Activated CD4-positive, alpha-beta memory T cell treated with anti-CD3 and anti-CD28 coated beads for 36 hours (primary cell): ENCODE measurements at regions of chr6 and their contacts with region 1.

Region 1: GRCh38 chr6:135195522-135195921 is 14.4 kb downstream of the MYB start:
- DNase-seq: no peak
- H3K4me3 Mint-ChIP-seq: no peak overlapping the region
- H3K27ac Mint-ChIP-seq: no peak overlapping the region
- H3K4me1 Mint-ChIP-seq: peaks cover 24% of the 10 kb centered on the region
- H3K27me3 Mint-ChIP-seq: no peaks in the 10 kb centered on the region

Region 2: GRCh38 chr6:135066397-135066796 is 129.1 kb before region 1 on chr6:
- CTCF ChIA-PET with region 1: no interaction called
- POLR2A ChIA-PET with region 1: no interaction called
- intact Hi-C with region 1: no loop called
- DNase-seq: no peak
- H3K4me3 Mint-ChIP-seq: no peak overlapping the region
- H3K27ac Mint-ChIP-seq: no peak overlapping the region
- H3K4me1 Mint-ChIP-seq: peaks cover 9% of the 10 kb centered on the region
- H3K27me3 Mint-ChIP-seq: no peaks in the 10 kb centered on the region

Region 3: GRCh38 chr6:135145063-135145800 is 50.3 kb before region 1 on chr6:
- CTCF ChIA-PET with region 1: interaction called, 4 read pairs
- POLR2A ChIA-PET with region 1: interaction called, 3 read pairs
- intact Hi-C with region 1: loop called (anchors 5 kb)
- DNase-seq: no peak
- H3K4me3 Mint-ChIP-seq: no peak overlapping the region
- H3K27ac Mint-ChIP-seq: peak overlapping the region; percentile 39
- H3K4me1 Mint-ChIP-seq: peaks cover 53% of the 10 kb centered on the region
- H3K27me3 Mint-ChIP-seq: peaks cover 2% of the 10 kb centered on the region

Region 4: DNA sequence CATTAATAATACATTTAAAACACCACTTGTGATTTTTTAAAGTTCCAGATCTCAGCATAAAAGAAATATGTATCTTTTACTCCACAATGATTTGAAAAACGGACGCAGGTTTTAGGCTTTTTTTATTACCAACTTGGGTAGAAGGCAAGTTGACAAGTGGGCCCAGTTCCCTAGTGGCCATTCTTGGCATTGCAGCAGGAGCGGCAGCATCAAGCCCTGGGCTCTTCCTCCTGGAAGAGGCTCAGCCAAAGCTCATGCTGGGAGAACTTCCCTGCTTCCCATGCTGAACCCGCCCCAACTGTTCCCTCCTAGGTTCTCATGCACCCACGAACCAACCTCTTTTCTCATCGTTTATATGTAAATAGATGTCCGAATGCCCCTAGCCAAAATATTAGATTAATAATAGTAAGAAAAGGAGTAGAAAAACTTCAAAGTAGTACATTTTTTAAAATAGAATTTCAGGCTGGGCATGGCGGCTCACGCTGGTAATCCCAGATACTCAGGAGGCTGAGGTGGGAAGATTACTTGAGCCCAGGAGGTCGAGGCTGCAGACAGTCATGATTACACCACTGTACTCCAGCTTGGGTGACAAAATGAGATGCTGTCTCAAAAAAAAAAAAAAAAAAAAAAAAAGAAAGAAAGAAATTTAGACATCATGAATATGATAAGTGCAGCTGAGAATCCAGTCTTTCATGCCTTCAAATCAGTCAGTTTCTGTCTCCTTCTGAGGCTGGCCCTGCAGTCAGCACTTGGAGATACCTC is 32.7 kb before region 1 on chr6:
- CTCF ChIA-PET with region 1: interaction called, 3 read pairs
- POLR2A ChIA-PET with region 1: no interaction called
- intact Hi-C with region 1: loop called (anchors 1 kb)
- DNase-seq: peak; percentile 54
- H3K4me3 Mint-ChIP-seq: peak overlapping the region; percentile 49
- H3K27ac Mint-ChIP-seq: peak overlapping the region; percentile 78
- H3K4me1 Mint-ChIP-seq: peaks cover 61% of the 10 kb centered on the region
- H3K27me3 Mint-ChIP-seq: peaks cover 3% of the 10 kb centered on the region

Region 5: DNA sequence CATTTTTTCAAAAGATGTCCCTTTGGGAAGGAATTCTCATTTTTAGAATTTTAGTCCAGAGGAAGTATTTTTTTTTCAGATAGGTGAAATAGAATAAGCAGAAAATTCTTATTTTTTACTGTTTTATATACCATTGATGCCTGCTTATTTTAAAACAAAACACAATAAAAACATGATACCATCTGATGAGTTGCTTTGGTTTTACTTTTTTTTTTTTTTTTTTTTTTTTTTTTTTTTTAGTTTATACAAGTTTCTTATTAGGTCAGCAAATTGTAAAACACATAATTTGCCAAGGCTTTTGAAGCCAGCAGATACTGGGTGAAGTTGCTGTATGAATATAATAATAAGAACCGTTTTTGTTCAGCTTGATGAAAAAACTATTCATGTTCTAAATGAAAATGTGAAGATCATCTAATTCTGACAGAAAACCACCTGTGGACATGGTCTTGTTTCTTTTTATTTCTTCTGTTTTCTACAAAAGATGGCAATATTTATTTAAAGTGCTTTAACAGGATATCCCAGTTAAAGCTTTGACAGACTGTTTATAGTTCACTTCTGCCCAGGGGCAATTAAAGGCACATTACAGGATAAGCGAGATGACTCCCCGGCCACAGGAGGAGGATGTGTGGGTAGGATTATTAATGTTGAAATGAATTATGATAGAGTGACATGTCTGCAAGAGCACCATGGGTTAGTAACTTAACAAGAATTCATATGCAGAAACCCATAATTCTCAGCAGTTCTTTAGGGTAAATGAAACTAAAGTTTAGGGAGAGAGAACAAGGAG is 16.7 kb after region 1 on chr6:
- CTCF ChIA-PET with region 1: interaction called, 3 read pairs
- POLR2A ChIA-PET with region 1: interaction called, 3 read pairs
- intact Hi-C with region 1: loop called (anchors 1 kb)
- DNase-seq: peak; percentile 55
- H3K4me3 Mint-ChIP-seq: peak overlapping the region; percentile 4
- H3K27ac Mint-ChIP-seq: peak overlapping the region; percentile 30
- H3K4me1 Mint-ChIP-seq: peaks cover 38% of the 10 kb centered on the region
- H3K27me3 Mint-ChIP-seq: no peaks in the 10 kb centered on the region

Region 6: GRCh38 chr6:135382182-135382628 is 186.7 kb after region 1 on chr6:
- CTCF ChIA-PET with region 1: no interaction called
- POLR2A ChIA-PET with region 1: no interaction called
- intact Hi-C with region 1: loop called (anchors 1 kb)
- DNase-seq: no peak
- H3K4me3 Mint-ChIP-seq: no peak overlapping the region
- H3K27ac Mint-ChIP-seq: no peak overlapping the region
- H3K4me1 Mint-ChIP-seq: peaks cover 6% of the 10 kb centered on the region
- H3K27me3 Mint-ChIP-seq: no peaks in the 10 kb centered on the region

Region 7: DNA sequence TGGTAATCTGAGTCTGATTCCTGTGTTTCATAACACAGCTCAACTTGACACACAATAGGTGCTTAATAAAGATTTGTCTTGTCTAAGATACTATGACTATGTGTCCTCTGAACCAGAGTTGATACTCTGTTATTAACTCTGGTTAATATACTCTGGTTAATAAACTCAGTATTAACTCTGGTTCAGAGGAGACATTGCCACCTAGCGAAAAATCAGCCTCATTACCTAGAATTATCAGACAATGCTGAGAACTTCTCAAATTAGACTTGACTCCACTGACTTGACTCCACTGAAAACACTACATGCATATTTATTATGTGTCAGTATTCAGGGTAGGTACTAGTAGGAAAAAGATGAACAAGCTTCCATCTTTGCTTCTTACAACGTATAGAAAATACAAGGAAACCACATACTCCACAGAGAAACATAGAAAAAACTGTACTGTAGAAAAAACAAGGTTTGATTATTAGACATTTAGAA is 228.2 kb after region 1 on chr6:
- CTCF ChIA-PET with region 1: no interaction called
- POLR2A ChIA-PET with region 1: no interaction called
- intact Hi-C with region 1: loop called (anchors 5 kb)
- DNase-seq: no peak
- H3K4me3 Mint-ChIP-seq: no peak overlapping the region
- H3K27ac Mint-ChIP-seq: no peak overlapping the region
- H3K4me1 Mint-ChIP-seq: peaks cover 4% of the 10 kb centered on the region
- H3K27me3 Mint-ChIP-seq: no peaks in the 10 kb centered on the region